ENCODE measurements at regions of chr16 and their contacts with region 1.

Region 1: GRCh38 chr16:76818606-76819181 is 372.3 kb upstream of the MON1B start:
- DNase-seq: no peak
- H3K4me3 ChIP-seq: no peak overlapping the region
- H3K27ac ChIP-seq: no peak overlapping the region
- H3K4me1 ChIP-seq: peaks cover 8% of the 10 kb centered on the region
- H3K27me3 ChIP-seq: no peaks in the 10 kb centered on the region
- CTCF ChIP-seq: no peak

Region 2: DNA sequence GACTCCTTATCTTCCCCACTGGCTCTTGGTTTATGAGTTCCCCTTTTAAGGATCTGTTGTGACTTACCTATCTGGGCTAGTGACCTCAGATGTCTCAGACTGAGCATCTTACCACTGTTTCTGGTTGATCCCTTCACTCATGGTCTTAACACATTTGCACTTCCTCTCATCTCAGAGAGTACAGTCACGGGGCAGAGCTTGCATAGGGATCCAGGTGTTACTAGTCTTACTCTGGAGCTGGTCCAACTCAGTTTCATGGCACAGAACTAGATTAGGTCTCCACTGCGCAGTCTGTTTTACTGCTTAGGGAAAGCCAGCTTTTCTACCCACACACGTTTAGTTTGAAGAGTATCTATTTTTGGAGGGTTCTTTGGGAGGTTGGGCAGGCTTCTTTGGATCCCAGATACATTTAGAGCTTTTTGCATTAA is 1242.3 kb before region 1 on chr16:
- CTCF ChIA-PET with region 1: no interaction called
- dilution Hi-C with region 1: no loop called
- in situ Hi-C with region 1: no loop called
- intact Hi-C with region 1: no loop called
- DNase-seq: no peak
- H3K4me3 ChIP-seq: no peak overlapping the region
- H3K27ac ChIP-seq: no peak overlapping the region
- H3K4me1 ChIP-seq: no peaks in the 10 kb centered on the region
- H3K27me3 ChIP-seq: no peaks in the 10 kb centered on the region
- CTCF ChIP-seq: no peak

Region 3: DNA sequence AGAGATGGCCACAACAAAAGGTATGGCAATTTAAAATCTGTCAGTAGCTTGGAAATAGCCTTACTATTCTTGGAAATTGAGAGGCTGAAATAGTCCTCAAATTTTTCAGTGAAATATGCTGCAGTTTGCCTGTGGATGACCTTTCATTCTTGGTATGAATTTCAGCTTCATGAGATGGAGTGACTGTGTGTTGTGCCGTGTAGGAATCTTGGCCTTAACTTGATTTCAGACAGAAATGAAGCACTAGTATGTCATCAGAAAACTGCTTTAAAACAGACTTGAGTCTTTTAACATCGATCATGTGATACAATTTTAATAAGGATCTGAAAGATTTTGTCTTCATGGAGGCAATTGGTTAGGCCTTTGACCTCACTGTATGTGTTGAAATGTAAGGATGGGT is 294.3 kb before region 1 on chr16:
- CTCF ChIA-PET with region 1: no interaction called
- dilution Hi-C with region 1: no loop called
- in situ Hi-C with region 1: no loop called
- intact Hi-C with region 1: no loop called
- DNase-seq: no peak
- H3K4me3 ChIP-seq: no peak overlapping the region
- H3K27ac ChIP-seq: no peak overlapping the region
- H3K4me1 ChIP-seq: no peaks in the 10 kb centered on the region
- H3K27me3 ChIP-seq: no peaks in the 10 kb centered on the region
- CTCF ChIP-seq: no peak

Region 4: DNA sequence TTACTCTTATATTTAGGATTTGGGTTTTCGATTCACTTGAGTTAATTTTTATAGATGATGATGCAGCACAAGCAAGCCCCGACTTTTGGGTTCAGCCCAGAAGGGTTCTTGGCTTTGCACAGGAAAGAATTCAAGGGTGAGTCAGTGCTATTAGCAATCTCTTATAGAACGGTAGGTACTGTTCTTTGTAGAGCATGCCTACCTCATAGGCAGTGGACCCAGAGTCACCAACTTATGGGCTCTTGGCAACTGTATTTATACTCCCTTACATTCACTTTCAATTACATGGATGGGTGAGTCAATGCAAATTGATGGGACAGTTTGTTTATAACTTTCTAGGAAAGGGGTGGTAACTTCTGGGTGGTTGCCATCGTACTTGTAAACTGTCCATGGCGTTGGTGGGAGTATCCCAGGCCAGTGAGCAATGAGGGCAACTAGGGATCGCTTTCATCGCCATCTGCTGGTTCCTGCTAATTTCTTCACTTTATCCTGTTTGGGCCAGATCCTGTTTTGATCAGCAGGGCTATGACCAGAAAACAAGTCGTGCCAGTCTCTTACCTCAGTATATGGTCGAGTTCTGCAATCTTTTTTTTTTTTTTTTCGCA is 178.9 kb before region 1 on chr16:
- CTCF ChIA-PET with region 1: no interaction called
- dilution Hi-C with region 1: no loop called
- in situ Hi-C with region 1: no loop called
- intact Hi-C with region 1: no loop called
- DNase-seq: peak; percentile 47
- H3K4me3 ChIP-seq: no peak overlapping the region
- H3K27ac ChIP-seq: no peak overlapping the region
- H3K4me1 ChIP-seq: no peaks in the 10 kb centered on the region
- H3K27me3 ChIP-seq: no peaks in the 10 kb centered on the region
- CTCF ChIP-seq: peak; percentile 27 to 38

Region 5: GRCh38 chr16:76676356-76676755 is 142.3 kb before region 1 on chr16:
- CTCF ChIA-PET with region 1: no interaction called
- dilution Hi-C with region 1: no loop called
- in situ Hi-C with region 1: no loop called
- intact Hi-C with region 1: loop called (anchors 10 kb)
- DNase-seq: peak; percentile 96
- H3K4me3 ChIP-seq: no peak overlapping the region
- H3K27ac ChIP-seq: peak overlapping the region; percentile 24
- H3K4me1 ChIP-seq: peaks cover 18% of the 10 kb centered on the region
- H3K27me3 ChIP-seq: no peaks in the 10 kb centered on the region
- CTCF ChIP-seq: no peak

Region 6: DNA sequence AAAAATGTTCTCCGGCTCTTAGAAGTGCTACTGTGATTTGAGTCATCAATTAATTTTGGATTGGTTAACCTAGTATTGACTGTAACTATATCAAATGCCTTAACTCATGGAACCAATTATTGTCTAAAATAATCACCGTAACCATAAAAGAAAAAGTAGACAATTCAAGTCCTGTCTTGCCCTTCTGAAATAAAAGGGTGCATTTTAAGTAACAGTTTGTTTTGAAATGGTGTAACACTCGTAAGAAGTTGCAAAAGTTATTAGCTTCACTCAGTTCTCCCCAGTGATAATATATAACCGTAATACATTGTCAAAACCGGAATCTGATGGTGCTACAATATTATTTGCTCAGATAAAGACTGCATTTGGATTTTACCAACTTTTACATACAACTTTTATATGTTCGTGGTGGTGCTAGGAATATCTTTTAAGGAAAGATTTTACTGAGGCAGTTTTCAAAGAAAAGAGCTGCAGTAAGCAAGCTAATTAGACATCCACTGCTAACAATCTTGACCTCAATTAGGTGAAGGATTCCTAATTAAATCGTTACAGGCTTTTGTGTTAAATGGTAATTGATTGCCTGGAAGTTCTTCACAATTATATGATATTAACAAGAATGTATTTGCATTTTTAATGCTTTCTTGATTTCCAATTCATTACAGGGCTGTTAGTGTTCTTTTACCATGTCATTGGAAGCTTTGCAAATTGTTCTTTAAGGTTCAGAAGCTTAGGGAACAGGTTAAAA is 40.8 kb before region 1 on chr16:
- CTCF ChIA-PET with region 1: no interaction called
- dilution Hi-C with region 1: no loop called
- in situ Hi-C with region 1: no loop called
- intact Hi-C with region 1: loop called (anchors 5 kb)
- DNase-seq: peak; percentile 58
- H3K4me3 ChIP-seq: no peak overlapping the region
- H3K27ac ChIP-seq: no peak overlapping the region
- H3K4me1 ChIP-seq: peaks cover 9% of the 10 kb centered on the region
- H3K27me3 ChIP-seq: no peaks in the 10 kb centered on the region
- CTCF ChIP-seq: no peak

Measured in mammary epithelial cell (primary cell).